CD4-positive, alpha-beta T cell (primary cell): ENCODE measurements at regions of chr16 and their contacts with region 1.

Region 1: DNA sequence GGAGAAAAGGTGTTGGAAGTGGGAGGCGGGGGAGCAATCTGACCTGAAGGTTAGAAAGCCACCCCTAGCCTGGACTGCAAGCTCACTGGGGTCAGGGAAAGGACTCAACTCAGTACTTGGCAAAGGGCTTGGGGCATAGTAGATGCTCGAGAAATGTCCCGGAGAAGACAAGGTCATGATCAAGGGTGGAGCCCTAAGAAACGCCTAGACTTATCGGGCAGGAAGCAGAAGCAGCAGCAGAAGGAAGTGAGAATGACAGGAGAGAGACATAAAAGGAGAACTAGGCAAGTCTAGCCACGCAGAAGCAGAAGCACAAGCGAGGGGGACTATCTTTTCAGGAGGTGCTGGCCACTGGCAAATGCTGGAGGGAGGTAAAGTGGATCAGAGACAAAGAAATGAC is 10.2 kb downstream of the COTL1 start:
- DNase-seq: peak in 4 of 14 experiments; percentile 53 to 74 (median 70)
- ATAC-seq: peak; percentile 60
- H3K4me3 ChIP-seq: peak overlapping the region; percentile 22
- H3K4me3 Mint-ChIP-seq: peak overlapping the region; percentile 47
- H3K27ac ChIP-seq: peak overlapping the region; percentile 51 to 63
- H3K27ac Mint-ChIP-seq: peak overlapping the region; percentile 88
- H3K4me1 ChIP-seq: peaks cover 97% of the 10 kb centered on the region
- H3K4me1 Mint-ChIP-seq: peaks cover 90% of the 10 kb centered on the region
- H3K27me3 ChIP-seq: no peaks in the 10 kb centered on the region
- H3K27me3 Mint-ChIP-seq: no peaks in the 10 kb centered on the region
- CTCF ChIP-seq: no peak

Region 2: GRCh38 chr16:84593825-84594724 is 13.6 kb before region 1 on chr16:
- CTCF ChIA-PET with region 1: interaction called, 3 read pairs
- POLR2A ChIA-PET with region 1: interaction called, 36 read pairs
- intact Hi-C with region 1: no loop called
- DNase-seq: peak; percentile 62 to 93 (median 80)
- ATAC-seq: peak; percentile 90
- H3K4me3 ChIP-seq: peak overlapping the region; percentile 61
- H3K4me3 Mint-ChIP-seq: peak overlapping the region; percentile 86
- H3K27ac ChIP-seq: peak overlapping the region; percentile 81 to 96
- H3K27ac Mint-ChIP-seq: peak overlapping the region; percentile 92
- H3K4me1 ChIP-seq: peaks cover 65% of the 10 kb centered on the region
- H3K4me1 Mint-ChIP-seq: peaks cover 69% of the 10 kb centered on the region
- H3K27me3 ChIP-seq: no peaks in the 10 kb centered on the region
- H3K27me3 Mint-ChIP-seq: no peaks in the 10 kb centered on the region
- CTCF ChIP-seq: no peak